Dorsolateral prefrontal cortex (tissue), 120 donors: ENCODE measurements at regions of chr19 and their contacts with region 1.

Region 1: DNA sequence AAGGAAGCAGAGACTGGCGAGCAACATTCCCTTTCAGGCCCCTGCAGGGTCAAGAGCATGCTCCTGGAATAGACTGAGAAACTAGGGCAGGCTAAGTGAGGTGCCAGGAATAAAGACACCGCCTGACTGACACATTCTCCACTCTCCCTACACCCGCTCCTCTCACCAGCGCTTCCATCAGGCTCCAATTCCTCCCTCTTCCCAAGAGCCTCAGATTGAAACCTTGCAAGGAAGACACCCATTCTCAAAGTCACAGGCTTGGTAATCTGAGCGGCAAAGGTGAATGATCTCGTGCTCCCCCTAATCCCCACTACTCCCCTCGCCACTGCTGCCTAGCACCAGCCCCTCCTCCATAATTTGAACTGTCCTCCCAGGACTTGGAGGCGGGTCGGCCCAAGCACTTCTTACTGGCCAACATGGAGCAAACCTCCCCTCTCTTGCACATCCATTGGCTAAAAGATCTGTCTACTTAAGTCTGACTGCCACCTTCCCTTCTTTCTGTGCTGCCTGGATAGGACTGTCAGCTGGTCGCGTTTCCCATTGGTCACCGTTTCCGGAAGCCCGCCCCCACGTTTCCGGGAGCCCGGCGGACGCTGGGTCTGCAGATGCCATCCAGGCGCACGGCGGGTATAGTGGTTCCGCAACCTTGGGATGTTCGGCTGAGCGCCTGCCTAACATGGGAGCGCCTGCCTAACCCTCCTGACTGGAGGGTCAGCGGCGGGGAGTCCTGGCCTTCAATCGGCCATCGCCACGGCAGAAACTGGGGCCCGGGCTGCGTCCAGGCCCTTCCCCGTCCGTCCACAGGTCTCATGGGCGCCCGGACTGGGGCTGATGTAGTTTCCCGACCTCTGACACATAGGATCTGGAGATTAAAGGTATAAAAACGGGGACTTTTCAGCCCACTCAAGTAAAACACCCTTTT is 33.6 kb downstream of the ZNF383 start:
- DNase-seq: peak; percentile 86 to 99 (median 96)
- H3K4me3 ChIP-seq: peak overlapping the region; percentile 60 to 99 (median 88)
- H3K27ac ChIP-seq: peak overlapping the region in 44 of 59 donors; percentile 12 to 86 (median 62)
- H3K27me3 ChIP-seq: no peaks in the 10 kb centered on the region
- CTCF ChIP-seq: peak in 8 of 56 donors; percentile 9 to 31 (median 23)

Region 2: GRCh38 chr19:37309834-37310575 is 58.4 kb after region 1 on chr19:
- intact Hi-C with region 1: loop called in 1 of 2 experiments (anchors 10 kb)
- DNase-seq: no peak
- H3K4me3 ChIP-seq: no peak overlapping the region
- H3K27ac ChIP-seq: no peak overlapping the region
- H3K27me3 ChIP-seq: no peaks in the 10 kb centered on the region
- CTCF ChIP-seq: peak in 1 of 56 donors; percentile 6

Region 3: DNA sequence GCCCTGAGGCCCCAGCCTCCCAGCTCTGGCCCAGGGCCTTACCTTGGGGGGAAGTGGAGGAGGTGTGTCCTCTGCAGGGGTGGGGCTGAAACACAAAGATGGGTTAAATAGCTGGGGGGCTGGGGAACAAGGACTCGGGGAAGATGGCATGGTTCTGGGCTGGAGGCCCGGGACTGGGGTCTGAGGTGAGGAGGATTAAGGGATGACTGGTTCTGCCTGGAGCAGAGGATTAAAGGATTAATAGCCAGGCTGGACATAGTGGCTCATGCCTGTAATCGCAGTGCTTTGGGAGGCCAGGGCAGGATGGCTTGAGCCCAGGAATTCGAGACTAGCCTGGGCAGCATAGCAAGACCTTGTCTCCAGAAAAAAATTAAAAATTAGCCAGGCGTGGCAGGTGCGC is 1354.6 kb after region 1 on chr19:
- intact Hi-C with region 1: no loop called
- DNase-seq: no peak
- H3K4me3 ChIP-seq: no peak overlapping the region
- H3K27ac ChIP-seq: no peak overlapping the region
- H3K27me3 ChIP-seq: no peaks in the 10 kb centered on the region
- CTCF ChIP-seq: no peak